A549 (cell line): ENCODE measurements at regions of chr9 and their contacts with region 1.

Region 1: GRCh38 chr9:121059998-121060636 is 10.0 kb upstream of the C5 start:
- DNase-seq: peak; percentile 71 to 81
- ATAC-seq: peak; percentile 74 to 75; a peak in 3 of 6 replicates
- H3K4me3 ChIP-seq: no peak overlapping the region
- H3K27ac ChIP-seq: peak overlapping the region; percentile 40 to 57; a peak in 5 of 6 replicates
- H3K4me1 ChIP-seq: peaks cover 33% of the 10 kb centered on the region
- CTCF ChIP-seq: peak; percentile 90
- EP300 ChIP-seq: no peak
- POLR2A ChIP-seq: no peak
- RAD21 ChIP-seq: peak; percentile 72 to 74

Region 2: DNA sequence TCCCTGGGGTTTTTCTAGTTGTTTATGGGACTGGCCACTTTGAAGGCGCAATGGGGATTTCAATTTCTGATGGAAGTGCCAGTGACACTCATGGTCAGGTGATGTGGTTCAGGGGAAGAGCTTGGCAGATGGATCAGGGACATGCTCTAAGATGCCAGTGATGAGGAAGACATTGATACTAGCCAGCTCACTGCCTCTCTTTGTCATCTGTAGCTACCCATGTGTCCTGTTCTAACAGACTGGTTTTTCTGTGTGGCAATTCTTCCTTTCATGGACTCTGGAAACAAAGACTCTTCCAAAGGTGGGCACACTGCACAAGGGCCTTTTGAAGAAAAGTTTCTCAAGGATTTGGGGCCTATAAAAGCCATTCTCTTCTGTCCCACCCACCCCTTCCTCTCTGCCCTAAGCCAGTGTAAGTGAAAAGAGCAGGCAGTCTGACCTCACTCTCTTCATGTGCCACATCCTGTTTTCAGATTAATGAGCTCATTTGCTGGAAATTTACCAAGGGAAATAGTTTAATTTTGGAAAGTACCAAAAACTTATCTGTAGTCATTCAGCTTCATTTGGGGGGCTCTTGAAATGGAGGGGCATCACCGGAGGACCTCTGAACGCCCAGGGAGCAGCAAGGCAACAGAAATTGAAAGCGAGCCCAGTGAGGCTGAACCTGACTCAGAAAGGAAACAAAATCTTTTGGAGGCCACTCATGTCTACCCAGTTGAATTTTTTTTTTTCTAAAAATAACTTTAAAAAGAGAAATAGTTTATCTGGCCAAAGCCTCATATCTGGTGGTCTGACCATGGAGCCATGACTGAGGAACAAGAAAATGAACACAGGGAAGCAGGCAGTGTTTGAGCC is 128.7 kb before region 1 on chr9:
- CTCF ChIA-PET with region 1: no interaction called
- POLR2A ChIA-PET with region 1: no interaction called
- DNase-seq: no peak
- ATAC-seq: no peak
- H3K4me3 ChIP-seq: no peak overlapping the region
- H3K27ac ChIP-seq: peak overlapping the region in 1 of 2 experiments; percentile 59; a peak in 2 of 6 replicates
- H3K4me1 ChIP-seq: peaks cover 39% of the 10 kb centered on the region
- CTCF ChIP-seq: no peak
- EP300 ChIP-seq: no peak
- POLR2A ChIP-seq: no peak
- RAD21 ChIP-seq: no peak

Region 3: DNA sequence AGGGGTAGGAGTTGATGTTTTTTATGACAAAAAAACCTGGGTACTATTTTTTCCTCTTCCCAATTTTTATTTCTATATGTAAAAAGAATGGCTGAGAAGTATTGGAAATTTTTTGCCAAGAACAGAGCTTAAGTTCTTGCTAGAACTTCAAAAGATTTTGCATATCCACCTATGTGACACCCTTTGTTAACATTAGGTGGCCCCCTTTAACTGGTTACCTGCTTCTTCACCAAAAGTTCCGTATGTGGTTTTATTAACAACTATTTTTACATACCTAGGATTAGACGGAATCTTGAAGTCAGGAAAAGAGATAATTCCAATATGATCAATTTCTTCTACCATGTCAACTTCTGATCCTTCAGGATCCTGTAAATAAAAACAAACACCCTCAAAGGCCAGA is 25.6 kb before region 1 on chr9:
- CTCF ChIA-PET with region 1: interaction called, 11 read pairs
- POLR2A ChIA-PET with region 1: no interaction called
- DNase-seq: no peak
- ATAC-seq: no peak
- H3K4me3 ChIP-seq: no peak overlapping the region
- H3K27ac ChIP-seq: no peak overlapping the region
- H3K4me1 ChIP-seq: peaks cover 16% of the 10 kb centered on the region
- CTCF ChIP-seq: peak; percentile 15; the same call in 1 of the 3 replicates
- EP300 ChIP-seq: no peak
- POLR2A ChIP-seq: no peak
- RAD21 ChIP-seq: peak in 1 of 2 experiments; percentile 16; a peak in 1 of 5 replicates

Region 4: GRCh38 chr9:121048618-121049017 is 11.5 kb before region 1 on chr9:
- CTCF ChIA-PET with region 1: interaction called, 55 read pairs
- POLR2A ChIA-PET with region 1: no interaction called
- DNase-seq: no peak
- ATAC-seq: peak; percentile 25 to 56; a peak in 3 of 6 replicates
- H3K4me3 ChIP-seq: peak overlapping the region; percentile 44
- H3K27ac ChIP-seq: peak overlapping the region; percentile 70 to 86
- H3K4me1 ChIP-seq: peaks cover 51% of the 10 kb centered on the region
- CTCF ChIP-seq: no peak
- EP300 ChIP-seq: no peak
- POLR2A ChIP-seq: no peak
- RAD21 ChIP-seq: no peak

Region 5: DNA sequence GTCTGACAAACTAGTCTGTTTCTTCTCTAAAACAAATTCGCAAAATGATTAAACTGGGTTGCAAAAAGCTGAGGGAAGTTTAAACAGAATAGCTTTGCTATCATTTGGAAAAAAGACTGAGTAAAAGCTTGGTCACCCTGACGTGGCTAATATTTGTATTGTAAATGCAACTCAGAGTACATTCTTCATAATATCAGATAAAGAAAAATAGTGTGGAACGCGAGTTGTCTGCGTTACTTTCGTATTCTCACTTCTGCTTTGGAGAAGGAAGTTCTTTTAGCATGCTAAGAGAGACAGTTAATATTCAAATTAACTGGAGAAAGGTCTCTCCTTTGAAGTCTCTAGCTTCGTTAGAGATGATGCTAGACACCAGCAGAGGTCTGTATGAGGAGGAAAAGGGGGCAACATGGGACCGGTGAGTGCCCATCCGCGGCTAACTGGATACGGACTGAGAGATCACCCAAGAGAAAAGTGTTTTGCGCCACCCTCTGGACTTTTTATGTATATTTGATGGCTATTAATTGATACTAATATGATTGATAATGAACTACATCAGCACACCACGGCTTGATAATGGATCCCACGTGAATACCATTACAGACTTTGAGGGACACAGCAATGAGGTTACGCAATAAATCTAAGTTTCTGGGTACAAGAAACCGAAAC is 11.8 kb after region 1 on chr9:
- CTCF ChIA-PET with region 1: interaction called, 32 read pairs
- POLR2A ChIA-PET with region 1: interaction called, 3 read pairs
- DNase-seq: peak; percentile 71 to 73
- ATAC-seq: peak; percentile 33 to 36; a peak in 3 of 6 replicates
- H3K4me3 ChIP-seq: peak overlapping the region; percentile 50
- H3K27ac ChIP-seq: peak overlapping the region; percentile 74 to 76
- H3K4me1 ChIP-seq: peaks cover 25% of the 10 kb centered on the region
- CTCF ChIP-seq: peak; percentile 75
- EP300 ChIP-seq: no peak
- POLR2A ChIP-seq: no peak
- RAD21 ChIP-seq: peak; percentile 71; a peak in 4 of 5 replicates

Region 6: DNA sequence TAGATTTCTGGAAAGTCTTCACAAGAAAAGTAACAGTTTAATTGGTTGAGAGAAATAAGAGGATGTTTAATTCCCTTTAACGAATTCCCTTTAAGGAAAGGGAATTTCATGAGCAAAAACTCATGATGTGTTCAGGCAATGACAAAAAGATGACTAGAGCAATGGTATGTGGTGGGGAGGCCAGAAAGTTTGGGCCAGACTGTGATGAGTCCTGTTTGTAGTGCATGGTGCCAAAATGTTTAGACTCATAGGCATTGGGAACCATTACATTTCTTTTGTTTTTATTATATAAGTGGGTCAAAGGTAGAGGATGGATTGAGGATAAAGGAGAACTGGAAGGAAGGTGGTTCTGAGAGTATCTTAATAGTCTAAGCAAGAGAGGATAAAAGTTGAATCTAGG is 25.5 kb after region 1 on chr9:
- CTCF ChIA-PET with region 1: no interaction called
- POLR2A ChIA-PET with region 1: no interaction called
- DNase-seq: no peak
- ATAC-seq: no peak
- H3K4me3 ChIP-seq: no peak overlapping the region
- H3K27ac ChIP-seq: no peak overlapping the region
- H3K4me1 ChIP-seq: no peaks in the 10 kb centered on the region
- CTCF ChIP-seq: no peak
- EP300 ChIP-seq: no peak
- POLR2A ChIP-seq: no peak
- RAD21 ChIP-seq: no peak